HAP-1 (cell line): ENCODE measurements at regions of chr2 and their contacts with region 1.

Region 1: DNA sequence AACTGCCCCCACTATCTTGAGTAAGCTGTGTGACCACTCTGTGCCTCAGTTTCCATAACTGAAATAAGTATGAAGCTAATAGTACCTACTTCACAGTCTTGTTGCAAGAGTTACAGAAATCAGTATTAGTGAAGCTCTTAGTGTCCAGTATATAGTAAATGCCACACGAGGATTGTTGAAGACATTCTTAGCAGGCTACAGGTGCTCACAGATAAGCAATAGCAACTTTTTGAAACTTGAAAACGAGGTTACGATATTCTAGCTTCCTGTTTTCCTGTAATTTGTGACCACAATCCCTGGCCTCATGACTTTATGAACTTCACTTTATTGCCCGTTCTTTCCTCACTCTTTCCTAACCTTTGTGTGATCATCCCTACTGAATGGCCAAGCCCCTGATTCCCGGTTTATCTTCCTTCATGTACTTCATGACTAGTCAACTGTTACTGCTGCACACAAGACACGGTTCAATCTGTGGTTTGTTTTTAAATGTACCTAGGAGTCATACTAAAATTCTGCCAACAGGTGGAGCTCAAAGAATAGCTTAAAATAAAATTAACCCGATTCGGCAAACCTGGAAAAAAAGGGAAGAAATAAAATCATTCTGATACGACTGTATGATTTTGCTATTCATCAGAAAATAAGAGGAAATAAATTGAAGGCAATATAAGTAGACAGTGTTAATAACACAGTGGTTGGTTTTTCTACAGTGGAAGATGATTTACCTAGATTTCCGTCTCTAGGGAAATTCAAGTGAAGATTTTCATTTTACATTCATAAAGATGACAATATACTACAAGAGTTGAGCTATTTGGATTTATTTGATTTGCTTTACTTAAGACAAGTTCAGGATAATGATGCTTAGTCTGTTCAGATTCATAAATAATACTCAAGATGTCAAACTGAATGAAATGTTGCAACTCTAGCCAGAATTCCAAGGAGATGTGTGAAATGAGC is 38.1 kb upstream of the STAT1 start:
- DNase-seq: peak; percentile 20 to 47
- H3K4me3 ChIP-seq: no peak overlapping the region
- H3K4me1 ChIP-seq: no peaks in the 10 kb centered on the region
- H3K27me3 ChIP-seq: peaks cover 49% of the 10 kb centered on the region

Region 2: DNA sequence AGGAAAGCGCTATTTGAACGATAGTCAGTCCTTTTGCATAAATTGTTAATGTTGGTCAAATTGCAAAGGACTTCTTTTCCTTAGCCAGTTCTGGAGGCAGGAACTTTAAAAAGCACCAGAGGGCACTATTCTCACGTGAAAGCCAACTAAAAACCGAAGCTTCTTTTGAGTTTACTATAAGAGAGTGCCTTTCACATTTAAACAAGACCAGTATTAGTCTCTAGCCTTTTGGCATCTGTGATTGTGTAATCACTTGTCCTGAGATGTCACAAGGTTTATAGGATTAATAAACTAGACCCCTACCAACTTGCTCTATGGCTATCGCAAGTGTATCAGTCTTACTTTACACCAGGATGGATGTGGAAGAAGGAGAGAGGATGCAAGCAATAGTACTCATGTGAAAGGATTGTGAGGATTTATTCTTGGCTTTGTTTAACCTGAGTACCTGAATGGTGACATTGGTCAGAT is 113.1 kb after region 1 on chr2:
- in situ Hi-C with region 1: no loop called
- DNase-seq: peak; percentile 27 to 50
- H3K4me3 ChIP-seq: no peak overlapping the region
- H3K4me1 ChIP-seq: no peaks in the 10 kb centered on the region
- H3K27me3 ChIP-seq: peaks cover 40% of the 10 kb centered on the region

Region 3: GRCh38 chr2:191369036-191369435 is 316.9 kb after region 1 on chr2:
- in situ Hi-C with region 1: loop called (anchors 25 kb)
- DNase-seq: peak in 1 of 2 experiments; percentile 16
- H3K4me3 ChIP-seq: no peak overlapping the region
- H3K4me1 ChIP-seq: no peaks in the 10 kb centered on the region
- H3K27me3 ChIP-seq: no peaks in the 10 kb centered on the region

Region 4: GRCh38 chr2:191539068-191539467 is 487.0 kb after region 1 on chr2:
- in situ Hi-C with region 1: loop called (anchors 25 kb)
- DNase-seq: peak; percentile 27 to 57
- H3K4me3 ChIP-seq: no peak overlapping the region
- H3K4me1 ChIP-seq: no peaks in the 10 kb centered on the region; the same call in none of the 2 replicates
- H3K27me3 ChIP-seq: no peaks in the 10 kb centered on the region